PC-3 (cell line): ENCODE measurements at regions of chr3 and their contacts with region 1.

Region 1: DNA sequence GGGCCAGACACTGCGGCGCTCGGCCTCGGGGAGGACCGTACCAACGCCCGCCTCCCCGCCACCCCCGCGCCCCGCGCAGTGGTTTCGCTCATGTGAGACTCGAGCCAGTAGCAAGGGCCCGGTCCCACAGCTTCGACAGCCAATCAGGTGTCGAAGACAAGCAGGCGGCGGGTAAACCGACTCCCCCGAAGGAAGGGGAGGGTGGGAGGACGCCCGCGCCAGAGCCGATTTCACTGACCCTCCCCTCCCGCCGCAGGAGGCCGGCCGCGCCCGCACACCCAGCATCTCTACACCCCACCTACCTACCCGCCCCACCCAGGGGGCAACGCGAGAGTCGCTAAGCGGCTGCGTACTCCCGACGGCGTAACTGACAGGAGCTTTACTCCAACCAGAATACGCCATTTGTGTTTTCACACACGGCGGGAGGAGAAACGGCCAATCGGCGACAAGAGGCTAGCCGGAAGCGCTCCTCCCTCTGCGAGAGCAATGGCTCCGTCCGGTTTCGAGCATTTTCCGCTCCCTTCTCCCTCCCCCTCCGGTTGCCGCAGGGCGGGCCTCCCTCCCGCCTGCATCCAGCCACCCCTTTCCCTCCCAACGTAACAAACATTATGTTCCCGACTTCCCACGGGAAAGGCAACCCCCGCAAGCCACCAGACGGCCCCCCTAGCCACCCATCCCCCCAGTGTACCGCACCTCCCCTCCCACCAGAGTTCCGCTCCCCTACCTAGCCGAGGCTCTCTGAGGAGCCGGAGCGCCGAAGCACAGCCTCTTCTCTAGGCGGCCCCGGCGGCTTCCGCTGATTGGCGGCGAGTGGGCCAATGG is 504 bp upstream of the SETD5 start:
- DNase-seq: peak; percentile 99
- ATAC-seq: peak; percentile 75
- H3K4me3 ChIP-seq: peak overlapping the region; percentile 80
- H3K27ac ChIP-seq: peak overlapping the region; percentile 92
- H3K4me1 ChIP-seq: peaks cover 54% of the 10 kb centered on the region
- H3K27me3 ChIP-seq: no peaks in the 10 kb centered on the region
- CTCF ChIP-seq: no peak

Region 2: DNA sequence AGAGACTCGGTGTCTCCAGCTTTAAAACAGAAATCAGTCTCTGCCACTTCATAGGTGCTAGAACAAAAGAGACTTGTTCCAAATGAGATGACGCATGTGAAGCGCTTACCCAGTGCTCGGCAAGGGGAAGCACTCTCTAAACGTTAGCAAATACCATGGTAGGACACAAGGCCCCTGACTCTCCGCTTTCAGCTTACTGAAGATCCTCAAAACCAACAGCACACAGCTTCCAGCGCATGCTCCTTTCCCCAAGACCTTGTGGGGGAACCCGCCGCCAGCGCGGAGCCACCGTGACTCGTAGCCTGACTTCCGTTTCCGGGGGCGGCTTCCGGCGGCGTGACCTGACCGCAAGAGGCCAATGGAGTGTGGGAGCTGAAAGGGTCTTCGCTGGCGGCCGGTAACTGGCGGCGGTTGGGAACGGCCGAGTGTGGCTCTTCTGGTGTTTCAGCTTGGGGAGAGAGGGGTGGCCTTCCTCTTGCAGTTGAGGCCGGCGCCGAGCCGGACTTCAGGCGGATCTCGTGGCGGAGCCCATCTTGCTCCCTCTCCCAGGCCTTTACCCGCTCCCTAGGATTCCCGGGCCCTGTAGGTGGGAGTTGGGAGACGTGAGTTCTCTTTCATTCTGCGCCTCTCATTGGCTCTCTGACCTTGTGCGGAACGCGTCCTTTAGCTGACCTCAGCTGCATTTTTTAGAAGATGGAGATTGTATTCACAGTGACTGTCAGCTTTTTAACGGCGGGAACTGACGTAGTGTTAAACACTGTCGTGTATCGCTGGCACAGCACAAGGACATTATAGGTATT is 34.0 kb before region 1 on chr3 and contains the start of gene THUMPD3:
- CTCF ChIA-PET with region 1: no interaction called
- POLR2A ChIA-PET with region 1: no interaction called
- intact Hi-C with region 1: loop called (anchors 2 kb)
- DNase-seq: peak; percentile 82
- ATAC-seq: peak; percentile 92
- H3K4me3 ChIP-seq: peak within 1 kb of the TSS; percentile 74
- H3K27ac ChIP-seq: peak within 1 kb of the TSS; percentile 90
- H3K4me1 ChIP-seq: peaks cover 19% of the 10 kb centered on the region
- H3K27me3 ChIP-seq: no peaks in the 10 kb centered on the region
- CTCF ChIP-seq: no peak
- total RNA-seq, gene THUMPD3: 45.3 and 65.5 TPM in 2 replicates

Region 3: GRCh38 chr3:9409981-9410854 is 13.3 kb after region 1 on chr3:
- CTCF ChIA-PET with region 1: no interaction called
- POLR2A ChIA-PET with region 1: no interaction called
- intact Hi-C with region 1: no loop called
- DNase-seq: no peak
- ATAC-seq: no peak
- H3K4me3 ChIP-seq: no peak overlapping the region
- H3K27ac ChIP-seq: no peak overlapping the region
- H3K4me1 ChIP-seq: no peaks in the 10 kb centered on the region
- H3K27me3 ChIP-seq: no peaks in the 10 kb centered on the region
- CTCF ChIP-seq: no peak

Region 4: DNA sequence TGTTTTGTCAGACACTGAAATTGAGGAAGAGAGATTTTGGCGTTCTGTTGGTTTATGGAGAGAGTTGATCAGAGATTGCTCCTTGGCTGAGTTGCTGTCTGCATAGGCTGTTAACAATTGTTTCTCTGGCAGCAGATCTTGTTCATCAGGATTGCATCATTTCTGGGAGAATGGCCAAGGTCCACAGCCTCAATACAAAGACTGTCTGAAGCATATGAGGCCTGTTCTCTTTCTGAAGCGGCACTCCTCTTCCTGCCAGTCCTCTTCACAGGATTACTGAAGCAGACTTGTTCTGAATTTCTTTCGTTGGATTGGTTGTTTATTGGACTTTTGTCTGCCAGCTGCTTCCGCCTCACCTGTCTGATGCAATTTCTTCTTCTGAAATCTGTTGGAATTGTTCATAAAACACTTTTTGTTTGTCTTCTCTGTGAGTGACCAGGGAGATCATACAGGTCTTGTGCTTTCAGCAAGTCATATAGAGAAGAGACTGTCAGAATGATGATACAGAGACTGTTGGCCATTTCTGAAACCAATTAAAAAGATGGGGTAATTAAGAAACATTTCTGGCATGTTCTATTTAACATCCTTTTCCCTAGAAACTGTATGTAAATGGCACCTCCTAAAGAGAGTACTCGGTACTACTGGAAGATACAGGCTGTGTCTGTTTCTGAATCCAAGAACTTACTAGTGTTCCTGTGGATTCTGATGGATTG is 26.0 kb after region 1 on chr3:
- CTCF ChIA-PET with region 1: interaction called, 5 read pairs
- POLR2A ChIA-PET with region 1: interaction called, 50 read pairs
- intact Hi-C with region 1: loop called (anchors 1 kb)
- DNase-seq: peak; percentile 98
- ATAC-seq: peak; percentile 96
- H3K4me3 ChIP-seq: peak overlapping the region; percentile 31; the same call in 1 of the 2 replicates
- H3K27ac ChIP-seq: peak overlapping the region; percentile 85
- H3K4me1 ChIP-seq: peaks cover 40% of the 10 kb centered on the region
- H3K27me3 ChIP-seq: no peaks in the 10 kb centered on the region
- CTCF ChIP-seq: peak; percentile 76

Region 5: DNA sequence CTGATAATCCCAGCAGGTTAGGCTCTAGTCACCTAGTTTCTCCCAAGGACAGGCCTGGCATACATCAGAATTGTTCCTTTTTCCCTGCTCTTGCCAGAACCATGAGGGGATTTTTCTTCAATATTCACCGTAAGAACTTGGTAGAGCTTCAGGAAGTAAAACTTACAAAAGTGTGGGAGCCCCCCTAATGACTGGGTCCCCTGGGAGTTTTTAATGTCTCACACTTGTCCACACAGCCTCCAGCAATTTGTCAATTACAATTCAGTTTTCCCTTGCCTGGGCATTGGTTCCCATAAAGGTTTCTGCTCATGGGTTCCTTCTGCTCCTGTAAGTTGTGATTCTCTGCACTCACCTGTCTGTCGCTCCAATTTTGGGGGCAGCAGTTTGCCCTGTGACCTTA is 128.2 kb after region 1 on chr3:
- CTCF ChIA-PET with region 1: no interaction called
- POLR2A ChIA-PET with region 1: no interaction called
- intact Hi-C with region 1: no loop called
- DNase-seq: no peak
- ATAC-seq: no peak
- H3K4me3 ChIP-seq: no peak overlapping the region
- H3K27ac ChIP-seq: no peak overlapping the region
- H3K4me1 ChIP-seq: no peaks in the 10 kb centered on the region
- H3K27me3 ChIP-seq: peaks cover 56% of the 10 kb centered on the region
- CTCF ChIP-seq: no peak

Region 6: GRCh38 chr3:10445561-10446175 is 1048.8 kb after region 1 on chr3:
- CTCF ChIA-PET with region 1: no interaction called
- POLR2A ChIA-PET with region 1: no interaction called
- intact Hi-C with region 1: no loop called
- DNase-seq: peak; percentile 4
- ATAC-seq: peak; percentile 38
- H3K4me3 ChIP-seq: no peak overlapping the region
- H3K27ac ChIP-seq: no peak overlapping the region
- H3K4me1 ChIP-seq: peaks cover 4% of the 10 kb centered on the region; the same call in 1 of the 2 replicates
- H3K27me3 ChIP-seq: peaks cover 48% of the 10 kb centered on the region
- CTCF ChIP-seq: no peak